RWPE1 (cell line): ENCODE measurements at regions of chr5 and their contacts with region 1.

Region 1: GRCh38 chr5:86880785-86881492 is 263.2 kb downstream of the COX7C start:
- DNase-seq: peak; percentile 80
- H3K27ac ChIP-seq: no peak overlapping the region
- CTCF ChIP-seq: peak; percentile 80

Region 2: DNA sequence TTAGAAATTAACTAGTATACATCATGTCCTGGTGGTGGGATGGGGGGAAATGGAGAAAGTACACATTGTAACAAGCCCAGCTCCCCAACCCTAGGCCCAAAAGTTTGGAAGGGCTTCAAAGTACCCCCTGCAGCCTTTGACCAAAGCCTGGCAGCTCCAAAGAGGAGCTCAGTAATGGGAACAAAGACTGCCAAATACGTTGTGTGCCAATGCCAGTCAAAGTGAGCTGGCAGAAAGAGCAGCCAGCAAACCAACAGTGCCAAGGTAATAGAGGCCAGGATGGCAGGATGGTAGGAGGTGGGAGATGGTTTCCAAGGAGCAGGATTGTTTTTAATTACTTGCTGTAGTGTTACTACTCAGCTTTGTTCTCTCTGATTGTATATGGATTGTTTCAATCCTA is 14.9 kb before region 1 on chr5:
- CTCF ChIA-PET with region 1: interaction called, 10 read pairs
- POLR2A ChIA-PET with region 1: no interaction called
- DNase-seq: no peak
- H3K27ac ChIP-seq: no peak overlapping the region
- CTCF ChIP-seq: no peak

Region 3: GRCh38 chr5:86968301-86968753 is 87.4 kb after region 1 on chr5:
- CTCF ChIA-PET with region 1: interaction called, 58 read pairs
- POLR2A ChIA-PET with region 1: no interaction called
- DNase-seq: peak; percentile 58
- H3K27ac ChIP-seq: no peak overlapping the region
- CTCF ChIP-seq: peak; percentile 61